Testis (tissue), 5 donors: ENCODE measurements at regions of chrX and their contacts with region 1.

Region 1: DNA sequence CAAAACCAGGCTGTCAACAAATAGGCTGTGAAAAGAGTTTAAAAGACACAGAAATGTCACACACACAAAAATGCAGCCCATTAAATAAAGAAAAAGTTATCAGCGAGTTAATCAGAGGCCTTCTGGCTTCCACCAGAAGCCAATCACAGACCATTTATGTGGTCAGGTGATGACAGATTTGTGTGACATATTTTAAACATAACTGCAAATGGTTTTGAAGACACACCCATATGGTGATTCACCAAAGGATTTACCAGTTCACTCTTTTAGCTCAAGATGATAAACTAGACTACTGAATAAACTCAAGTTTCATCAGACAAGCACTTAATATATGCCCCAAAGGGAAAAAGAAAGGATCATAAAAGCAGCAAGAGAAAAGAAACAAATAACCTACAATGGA is 181.2 kb downstream of the SPANXN4 start:
- DNase-seq: no peak
- H3K4me3 ChIP-seq: no peak overlapping the region
- H3K27ac ChIP-seq: no peak overlapping the region
- H3K4me1 ChIP-seq: no peaks in the 10 kb centered on the region
- H3K27me3 ChIP-seq: no peaks in the 10 kb centered on the region
- CTCF ChIP-seq: no peak
- POLR2A ChIP-seq: no peak

Region 2: GRCh38 chrX:142359331-142359730 is 847.6 kb before region 1 on chrX:
- intact Hi-C with region 1: loop called (anchors 5 kb)
- DNase-seq: no peak
- H3K4me3 ChIP-seq: no peak overlapping the region
- H3K27ac ChIP-seq: no peak overlapping the region
- H3K4me1 ChIP-seq: no peaks in the 10 kb centered on the region
- H3K27me3 ChIP-seq: no peaks in the 10 kb centered on the region
- CTCF ChIP-seq: no peak
- POLR2A ChIP-seq: no peak